ENCODE measurements at regions of chr7 and their contacts with region 1.

Region 1: DNA sequence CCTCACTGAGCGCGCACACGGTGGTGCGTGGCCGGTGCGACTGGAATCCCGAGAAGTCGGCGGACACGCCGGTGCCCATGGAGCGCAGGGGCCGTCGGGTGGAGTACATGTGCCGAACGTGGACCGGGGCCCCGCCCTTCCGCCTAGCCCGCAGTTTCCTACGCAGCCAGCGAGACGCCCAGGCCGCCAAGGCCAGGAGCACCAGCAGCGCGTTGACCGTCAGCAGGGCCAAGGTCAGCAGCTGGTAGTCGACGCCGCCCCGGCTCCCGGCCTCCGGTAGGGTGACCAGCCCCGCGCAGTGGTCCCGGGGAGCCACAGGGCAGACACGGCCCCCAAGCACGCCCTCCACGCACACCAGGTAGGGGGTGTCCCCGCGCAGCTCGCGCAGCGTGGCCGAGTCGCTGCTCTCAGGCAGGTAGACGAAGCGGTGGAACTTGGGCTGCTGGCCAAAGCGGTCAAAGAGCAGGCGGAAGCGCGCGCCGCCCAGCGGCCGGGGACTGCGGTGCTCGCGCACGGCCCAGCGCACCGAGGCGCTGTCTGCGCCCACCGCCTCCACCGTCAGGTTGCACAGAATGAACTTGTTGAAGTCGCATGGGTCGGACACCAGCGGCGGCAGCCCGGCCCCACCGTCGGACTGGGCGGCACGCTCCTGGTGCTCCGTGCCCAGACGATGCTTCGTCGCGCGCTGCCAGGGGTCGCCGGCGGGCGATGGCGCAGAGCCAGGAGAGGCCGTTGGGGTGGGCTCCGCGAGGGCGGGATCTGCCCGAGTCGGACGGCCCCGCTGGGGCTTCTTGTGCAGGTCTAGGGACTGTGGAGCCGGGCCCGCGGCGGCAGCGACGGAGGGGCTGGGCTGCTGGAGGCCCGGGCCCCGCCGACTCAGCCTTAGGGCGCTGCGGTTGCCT is 2.2 kb downstream of the TRIL start:
- DNase-seq: peak; percentile 86
- ATAC-seq: peak; percentile 56
- H3K4me3 Mint-ChIP-seq: peak overlapping the region; percentile 59
- H3K27ac Mint-ChIP-seq: no peak overlapping the region
- H3K4me1 Mint-ChIP-seq: peaks cover 45% of the 10 kb centered on the region
- H3K27me3 Mint-ChIP-seq: peaks cover 57% of the 10 kb centered on the region
- CTCF ChIP-seq: 0 out of 2 replicates have a peak, but pooled peaks have one; percentile 25

Region 2: DNA sequence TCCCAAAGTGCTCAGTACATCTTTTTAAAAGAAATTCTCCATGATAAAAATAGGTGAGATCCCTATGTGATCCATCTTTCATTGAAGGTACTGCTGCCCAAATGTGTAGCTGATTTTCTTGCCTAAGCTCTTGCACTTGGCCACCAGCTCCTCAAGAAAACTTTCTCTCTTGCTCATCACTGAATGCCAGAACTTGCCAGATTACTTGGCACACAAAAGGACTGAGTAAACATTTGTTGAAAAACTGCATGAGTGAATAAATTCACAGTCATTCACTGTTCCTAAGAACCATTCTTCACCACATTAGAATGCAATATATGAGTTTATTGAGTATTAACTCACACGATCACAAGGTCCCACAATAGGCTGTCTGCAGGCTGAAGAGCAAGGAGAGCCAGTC is 97.8 kb before region 1 on chr7:
- CTCF ChIA-PET with region 1: no interaction called
- POLR2A ChIA-PET with region 1: no interaction called
- DNase-seq: no peak
- ATAC-seq: no peak
- H3K4me3 Mint-ChIP-seq: no peak overlapping the region
- H3K27ac Mint-ChIP-seq: no peak overlapping the region
- H3K4me1 Mint-ChIP-seq: peaks cover 8% of the 10 kb centered on the region
- H3K27me3 Mint-ChIP-seq: peaks cover 10% of the 10 kb centered on the region
- CTCF ChIP-seq: no peak

Region 3: DNA sequence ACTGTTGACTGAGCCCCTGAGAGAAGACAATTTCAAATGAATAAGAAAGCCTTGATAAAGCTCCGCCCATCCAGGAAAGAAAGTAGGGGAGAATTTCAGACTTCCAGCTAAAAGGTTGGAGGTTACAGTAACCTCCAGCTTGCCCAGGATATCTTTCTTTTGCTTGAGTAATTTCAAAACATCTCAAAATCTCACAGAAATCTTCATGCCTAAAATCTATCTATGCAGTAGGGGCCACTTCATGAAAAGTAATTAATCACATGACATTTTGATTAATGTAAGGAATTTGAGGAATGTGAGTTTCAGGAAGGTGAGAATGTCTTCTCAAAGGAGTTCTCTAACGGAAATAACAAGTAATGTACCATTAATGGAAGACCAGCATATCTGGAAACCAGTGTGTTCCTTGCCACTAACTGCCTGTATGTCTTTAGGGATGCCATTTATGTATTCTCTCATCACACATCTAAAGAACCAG is 22.1 kb before region 1 on chr7:
- CTCF ChIA-PET with region 1: interaction called, 407 read pairs
- POLR2A ChIA-PET with region 1: no interaction called
- DNase-seq: no peak
- ATAC-seq: no peak; the same call in 1 of the 2 replicates
- H3K4me3 Mint-ChIP-seq: no peak overlapping the region
- H3K27ac Mint-ChIP-seq: peak overlapping the region; percentile 45; the same call in 1 of the 2 replicates
- H3K4me1 Mint-ChIP-seq: peaks cover 21% of the 10 kb centered on the region
- H3K27me3 Mint-ChIP-seq: no peaks in the 10 kb centered on the region; the same call in 1 of the 2 replicates
- CTCF ChIP-seq: no peak

Region 4: DNA sequence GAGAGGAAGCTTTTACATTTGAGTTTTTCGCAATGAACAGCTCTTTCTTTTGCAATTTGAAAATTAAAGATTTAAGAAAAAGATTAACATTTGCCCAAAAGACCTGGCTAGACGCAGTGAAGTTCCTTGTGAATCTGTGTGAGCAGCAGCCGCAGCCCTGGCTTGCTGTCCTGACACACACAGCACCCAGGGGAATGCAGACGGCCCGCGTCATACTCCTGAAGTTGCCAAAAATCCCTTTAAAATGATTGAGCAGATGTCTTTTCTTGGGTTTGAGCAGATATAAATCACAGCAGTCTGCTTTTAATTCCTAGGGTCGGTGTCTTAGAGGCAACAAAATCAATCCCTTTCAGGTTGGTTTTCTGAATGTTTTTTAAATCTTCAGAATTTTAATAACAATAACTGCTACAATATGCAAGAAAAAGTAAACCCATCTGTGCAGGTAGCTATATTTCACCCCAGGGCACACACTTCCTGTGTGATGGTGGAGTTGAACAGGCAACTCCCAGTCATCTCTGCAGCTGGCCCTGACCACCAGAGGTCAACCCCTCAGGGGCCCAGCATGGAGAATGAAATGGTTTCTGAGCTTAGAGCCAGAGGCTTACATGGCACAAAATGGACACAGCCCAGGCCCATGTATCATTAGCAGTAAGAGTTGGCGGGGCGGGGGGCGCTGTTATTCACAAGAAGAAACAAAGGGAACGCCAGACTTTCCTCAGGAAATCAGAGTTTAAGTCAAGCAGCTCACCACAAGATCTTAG is 34.4 kb after region 1 on chr7:
- CTCF ChIA-PET with region 1: interaction called, 35 read pairs
- POLR2A ChIA-PET with region 1: no interaction called
- DNase-seq: peak; percentile 22
- ATAC-seq: peak; percentile 56; the same call in 1 of the 2 replicates
- H3K4me3 Mint-ChIP-seq: no peak overlapping the region
- H3K27ac Mint-ChIP-seq: no peak overlapping the region
- H3K4me1 Mint-ChIP-seq: peaks cover 28% of the 10 kb centered on the region
- H3K27me3 Mint-ChIP-seq: no peaks in the 10 kb centered on the region
- CTCF ChIP-seq: no peak

Region 5: DNA sequence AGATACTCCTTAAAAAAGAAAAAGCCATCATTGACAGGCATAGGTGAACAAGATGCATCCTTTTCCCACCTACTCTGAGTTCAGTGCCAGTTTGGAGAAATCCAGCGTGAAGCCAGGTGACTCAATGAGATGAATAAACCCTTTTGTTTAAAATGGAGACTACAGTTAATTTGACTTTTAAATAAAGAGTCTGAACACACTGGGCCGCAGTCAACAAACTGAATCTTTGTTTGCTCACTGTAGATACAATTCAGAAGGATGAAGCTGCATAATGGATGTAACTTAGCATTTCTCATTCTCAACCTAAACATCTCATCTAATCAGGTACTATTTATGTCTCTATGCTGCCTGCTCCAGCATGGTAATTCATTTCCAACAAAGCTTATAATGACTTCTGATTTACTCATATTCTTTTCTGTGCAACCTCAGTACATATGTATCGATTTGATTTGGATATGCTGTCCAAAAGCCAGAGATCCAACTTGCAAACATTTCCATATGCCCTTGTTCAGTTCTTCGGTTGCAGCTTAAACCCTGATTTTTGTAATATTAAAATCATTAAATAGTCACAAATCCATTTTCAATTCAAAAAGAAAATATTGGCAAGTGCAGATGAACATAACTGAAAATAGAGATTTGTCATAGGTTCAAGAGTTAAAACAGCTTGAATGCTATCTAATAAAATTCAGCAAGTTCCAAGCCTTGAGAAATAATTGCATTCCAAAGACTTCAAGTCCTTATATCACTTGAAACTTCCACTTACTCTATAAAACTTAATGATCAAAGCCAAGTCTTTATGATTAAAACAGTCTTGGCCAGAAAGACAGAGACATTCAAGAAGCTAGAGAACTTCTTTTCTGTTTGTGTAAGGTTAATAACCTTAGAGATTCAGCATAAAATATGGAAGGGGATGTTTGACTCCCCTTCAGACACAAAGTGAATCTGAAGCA is 122.6 kb after region 1 on chr7:
- CTCF ChIA-PET with region 1: interaction called, 13 read pairs
- POLR2A ChIA-PET with region 1: no interaction called
- DNase-seq: no peak
- ATAC-seq: no peak
- H3K4me3 Mint-ChIP-seq: no peak overlapping the region
- H3K27ac Mint-ChIP-seq: no peak overlapping the region; the same call in 1 of the 2 replicates
- H3K4me1 Mint-ChIP-seq: peaks cover 18% of the 10 kb centered on the region
- H3K27me3 Mint-ChIP-seq: no peaks in the 10 kb centered on the region
- CTCF ChIP-seq: no peak

Region 6: DNA sequence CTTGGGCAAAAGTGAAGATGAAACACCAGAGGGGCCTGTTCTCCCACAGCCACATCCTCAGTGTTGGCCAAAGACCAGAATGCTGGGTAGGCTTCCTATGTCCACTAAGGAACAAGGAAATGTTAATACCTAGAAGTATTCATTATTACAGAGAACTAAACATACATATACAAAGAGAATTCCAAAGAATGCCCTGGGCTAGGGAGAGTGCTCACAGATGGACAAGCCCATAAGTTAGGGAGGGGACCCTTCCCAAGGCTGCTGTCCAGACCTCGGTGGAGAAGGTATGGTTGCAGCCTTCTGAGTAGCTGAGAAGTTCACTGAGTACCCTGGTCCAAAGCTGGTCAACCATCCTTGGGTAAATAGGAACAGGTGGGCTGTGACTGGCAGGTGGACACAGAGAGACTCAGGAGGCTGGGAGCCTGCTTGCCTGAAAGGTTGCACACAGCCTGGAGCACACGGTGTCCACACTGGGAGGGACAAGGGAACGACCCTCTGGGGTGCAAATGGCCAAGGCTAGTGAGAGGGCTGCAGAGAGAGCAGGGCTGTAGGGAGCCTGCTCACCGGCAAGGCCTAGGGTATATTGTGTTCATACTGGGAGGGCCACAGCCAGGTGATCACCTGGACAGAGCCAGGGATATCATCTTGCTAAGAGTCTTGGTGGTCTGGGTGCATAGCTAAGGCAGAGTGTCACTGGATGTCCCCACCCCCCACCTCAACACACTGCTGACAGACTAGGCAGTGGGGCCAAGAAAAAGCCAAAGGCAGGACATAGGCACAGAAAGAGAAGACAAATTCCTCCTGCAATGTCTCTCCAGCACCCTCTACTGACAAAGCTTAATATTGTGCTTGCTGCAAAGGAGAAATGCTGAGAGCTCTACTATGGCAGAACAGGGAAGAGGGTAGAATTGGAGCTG is 150.0 kb after region 1 on chr7:
- CTCF ChIA-PET with region 1: interaction called, 119 read pairs
- POLR2A ChIA-PET with region 1: interaction called, 3 read pairs
- DNase-seq: peak; percentile 34
- ATAC-seq: peak; percentile 86
- H3K4me3 Mint-ChIP-seq: no peak overlapping the region
- H3K27ac Mint-ChIP-seq: no peak overlapping the region
- H3K4me1 Mint-ChIP-seq: no peaks in the 10 kb centered on the region; the same call in 1 of the 2 replicates
- H3K27me3 Mint-ChIP-seq: no peaks in the 10 kb centered on the region
- CTCF ChIP-seq: peak; percentile 47

Region 7: DNA sequence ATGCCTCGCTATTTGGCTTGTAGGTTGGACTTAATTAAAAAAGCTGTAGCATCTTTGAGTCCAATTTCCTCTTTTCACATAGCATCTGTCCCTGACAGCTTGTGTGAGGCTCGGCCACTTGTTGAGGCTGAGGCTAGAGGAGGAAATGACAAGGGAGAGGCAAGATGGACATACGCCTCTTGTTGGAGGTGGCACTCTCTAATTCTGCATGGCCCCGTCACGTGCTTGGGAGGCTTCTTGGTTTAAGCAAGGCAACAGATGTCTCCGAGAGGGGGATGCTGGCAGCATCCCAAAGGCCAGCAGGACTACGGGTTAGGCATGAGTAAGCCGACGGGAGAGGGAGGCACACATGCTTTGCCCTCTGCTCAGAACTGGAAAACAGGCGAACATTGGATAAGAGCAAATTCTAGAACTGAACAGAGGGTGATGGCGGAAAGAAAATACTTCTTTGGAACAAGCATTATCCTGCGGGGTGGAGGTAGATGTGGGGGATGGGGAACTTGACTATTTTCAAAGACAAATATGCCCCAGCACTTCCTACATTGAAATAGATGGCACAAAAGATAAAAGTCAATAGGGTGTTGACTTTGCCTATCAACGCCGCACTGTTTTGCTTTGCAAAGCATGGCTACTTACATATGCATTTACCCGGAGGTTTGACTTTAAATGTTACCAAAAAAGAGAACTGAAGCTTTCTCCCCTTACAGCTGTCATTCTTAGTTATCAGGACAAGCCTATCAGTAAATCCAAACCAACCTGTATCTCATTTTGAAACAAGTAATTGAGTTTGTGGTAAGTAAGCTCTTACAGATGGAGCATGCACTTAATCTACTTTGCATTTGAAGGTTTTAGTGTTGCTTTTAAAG is 333.4 kb after region 1 on chr7:
- CTCF ChIA-PET with region 1: no interaction called
- POLR2A ChIA-PET with region 1: no interaction called
- DNase-seq: no peak
- ATAC-seq: no peak
- H3K4me3 Mint-ChIP-seq: no peak overlapping the region
- H3K27ac Mint-ChIP-seq: no peak overlapping the region
- H3K4me1 Mint-ChIP-seq: peaks cover 60% of the 10 kb centered on the region
- H3K27me3 Mint-ChIP-seq: no peaks in the 10 kb centered on the region
- CTCF ChIP-seq: no peak

Region 8: GRCh38 chr7:29345600-29345999 is 389.6 kb after region 1 on chr7:
- CTCF ChIA-PET with region 1: interaction called, 21 read pairs
- POLR2A ChIA-PET with region 1: no interaction called
- DNase-seq: peak; percentile 66
- ATAC-seq: peak; percentile 90
- H3K4me3 Mint-ChIP-seq: no peak overlapping the region
- H3K27ac Mint-ChIP-seq: no peak overlapping the region
- H3K4me1 Mint-ChIP-seq: no peaks in the 10 kb centered on the region
- H3K27me3 Mint-ChIP-seq: peaks cover 4% of the 10 kb centered on the region; the same call in 1 of the 2 replicates
- CTCF ChIP-seq: 0 out of 2 replicates have a peak, but pooled peaks have one; percentile 18